PC-9 (cell line): ENCODE measurements at regions of chr9 and their contacts with region 1.

Region 1: DNA sequence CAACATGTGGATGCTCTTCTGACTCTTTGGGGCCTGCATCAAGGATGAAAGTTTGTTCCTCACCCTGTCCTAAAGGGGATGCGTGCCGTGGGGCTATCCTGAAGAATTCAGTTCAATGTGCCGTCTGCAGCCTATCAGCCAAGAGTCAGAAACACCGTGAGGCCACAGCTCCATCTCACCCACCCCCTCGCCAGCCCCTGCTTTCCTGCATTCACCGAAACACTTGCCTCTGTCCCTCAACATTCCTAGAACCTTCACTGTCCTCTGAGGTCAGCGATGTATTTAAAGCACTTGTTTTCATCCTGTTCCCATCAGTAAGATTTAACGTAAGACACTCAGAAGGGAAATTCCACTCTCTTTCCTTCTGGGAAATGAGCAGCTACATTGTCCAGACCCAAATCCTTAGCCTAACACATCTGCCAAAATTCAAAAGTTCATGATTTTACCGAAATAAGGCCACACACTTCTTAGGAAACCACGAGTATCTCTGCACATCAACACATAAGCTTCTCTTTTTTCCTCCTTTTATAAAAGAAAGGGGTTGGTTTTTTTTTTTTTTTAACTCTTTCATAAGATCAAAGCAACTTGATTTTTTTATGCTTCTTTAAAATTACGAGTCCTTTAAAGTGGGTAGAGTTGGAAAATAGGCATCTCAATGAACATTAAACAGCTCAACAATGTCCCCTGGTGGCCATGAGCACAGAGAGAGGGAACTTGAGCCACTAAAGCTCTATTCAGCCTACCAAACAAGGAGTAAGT is 100.7 kb downstream of the SUSD1 start:
- DNase-seq: peak; percentile 62 to 78
- H3K4me3 ChIP-seq: no peak overlapping the region
- H3K27ac ChIP-seq: peak overlapping the region; percentile 50
- H3K4me1 ChIP-seq: peaks cover 23% of the 10 kb centered on the region
- H3K27me3 ChIP-seq: no peaks in the 10 kb centered on the region
- CTCF ChIP-seq: peak; percentile 94

Region 2: GRCh38 chr9:111661150-111661801 is 413.2 kb before region 1 on chr9 and contains the start of gene GNG10:
- CTCF ChIA-PET with region 1: no interaction called
- POLR2A ChIA-PET with region 1: interaction called, 4 read pairs
- intact Hi-C with region 1: loop called (anchors 5 kb)
- DNase-seq: peak in 1 of 2 experiments; percentile 69
- H3K4me3 ChIP-seq: peak within 1 kb of the TSS; percentile 73
- H3K27ac ChIP-seq: peak within 1 kb of the TSS; percentile 48
- H3K4me1 ChIP-seq: peaks cover 16% of the 10 kb centered on the region
- H3K27me3 ChIP-seq: no peaks in the 10 kb centered on the region
- CTCF ChIP-seq: no peak
- total RNA-seq, gene GNG10: 70.8 and 76.9 TPM in 2 replicates

Region 3: DNA sequence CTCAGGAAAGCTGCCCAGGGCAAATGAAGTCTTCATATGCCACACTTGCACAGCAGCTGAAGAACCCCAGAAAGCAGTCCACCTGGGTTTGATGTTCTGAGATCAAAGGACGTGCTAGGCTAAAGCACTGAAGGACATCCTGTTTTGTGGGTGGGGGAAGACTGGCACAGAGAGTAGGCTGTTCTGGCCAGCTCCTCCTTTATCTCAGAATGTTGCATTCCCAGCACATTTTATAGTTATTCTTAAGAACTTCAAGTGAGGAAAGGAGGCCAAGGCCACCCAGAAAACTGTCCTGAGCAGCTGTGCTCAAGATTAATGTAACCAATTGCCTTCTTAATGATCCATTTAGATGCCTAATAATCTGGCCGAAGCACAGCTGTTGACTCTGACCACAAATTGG is 290.6 kb before region 1 on chr9:
- CTCF ChIA-PET with region 1: no interaction called
- POLR2A ChIA-PET with region 1: interaction called, 10 read pairs
- intact Hi-C with region 1: no loop called
- DNase-seq: no peak
- H3K4me3 ChIP-seq: no peak overlapping the region
- H3K27ac ChIP-seq: no peak overlapping the region
- H3K4me1 ChIP-seq: no peaks in the 10 kb centered on the region
- H3K27me3 ChIP-seq: no peaks in the 10 kb centered on the region
- CTCF ChIP-seq: no peak

Region 4: GRCh38 chr9:111904861-111905291 is 169.6 kb before region 1 on chr9:
- CTCF ChIA-PET with region 1: no interaction called
- POLR2A ChIA-PET with region 1: interaction called, 31 read pairs
- intact Hi-C with region 1: no loop called
- DNase-seq: no peak
- H3K4me3 ChIP-seq: no peak overlapping the region
- H3K27ac ChIP-seq: no peak overlapping the region; the same call in 1 of the 2 replicates
- H3K4me1 ChIP-seq: peaks cover 59% of the 10 kb centered on the region
- H3K27me3 ChIP-seq: no peaks in the 10 kb centered on the region
- CTCF ChIP-seq: no peak

Region 5: DNA sequence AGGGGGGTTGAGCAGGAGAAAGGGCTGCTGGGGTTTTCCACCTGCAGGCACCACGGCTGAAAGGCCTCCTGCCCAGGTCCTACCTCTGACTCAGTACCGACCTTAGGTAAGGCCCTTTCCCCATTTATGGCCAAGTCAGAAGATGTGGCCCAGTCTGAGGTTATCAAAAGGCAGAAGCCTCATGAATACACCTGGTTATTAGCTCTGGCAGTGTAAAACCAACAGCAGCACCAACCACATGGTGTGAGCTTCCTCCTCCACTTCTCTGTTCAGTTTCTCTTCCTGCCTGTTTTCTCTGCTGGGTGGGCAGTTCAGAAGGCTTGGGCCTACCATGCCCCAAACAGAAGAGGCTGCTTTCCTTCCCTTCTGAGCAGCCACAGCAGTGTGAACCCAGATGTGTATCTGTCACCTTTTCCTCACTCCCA is 90.9 kb before region 1 on chr9:
- CTCF ChIA-PET with region 1: no interaction called
- POLR2A ChIA-PET with region 1: no interaction called
- intact Hi-C with region 1: no loop called
- DNase-seq: no peak
- H3K4me3 ChIP-seq: no peak overlapping the region
- H3K27ac ChIP-seq: no peak overlapping the region
- H3K4me1 ChIP-seq: no peaks in the 10 kb centered on the region
- H3K27me3 ChIP-seq: no peaks in the 10 kb centered on the region
- CTCF ChIP-seq: no peak

Region 6: DNA sequence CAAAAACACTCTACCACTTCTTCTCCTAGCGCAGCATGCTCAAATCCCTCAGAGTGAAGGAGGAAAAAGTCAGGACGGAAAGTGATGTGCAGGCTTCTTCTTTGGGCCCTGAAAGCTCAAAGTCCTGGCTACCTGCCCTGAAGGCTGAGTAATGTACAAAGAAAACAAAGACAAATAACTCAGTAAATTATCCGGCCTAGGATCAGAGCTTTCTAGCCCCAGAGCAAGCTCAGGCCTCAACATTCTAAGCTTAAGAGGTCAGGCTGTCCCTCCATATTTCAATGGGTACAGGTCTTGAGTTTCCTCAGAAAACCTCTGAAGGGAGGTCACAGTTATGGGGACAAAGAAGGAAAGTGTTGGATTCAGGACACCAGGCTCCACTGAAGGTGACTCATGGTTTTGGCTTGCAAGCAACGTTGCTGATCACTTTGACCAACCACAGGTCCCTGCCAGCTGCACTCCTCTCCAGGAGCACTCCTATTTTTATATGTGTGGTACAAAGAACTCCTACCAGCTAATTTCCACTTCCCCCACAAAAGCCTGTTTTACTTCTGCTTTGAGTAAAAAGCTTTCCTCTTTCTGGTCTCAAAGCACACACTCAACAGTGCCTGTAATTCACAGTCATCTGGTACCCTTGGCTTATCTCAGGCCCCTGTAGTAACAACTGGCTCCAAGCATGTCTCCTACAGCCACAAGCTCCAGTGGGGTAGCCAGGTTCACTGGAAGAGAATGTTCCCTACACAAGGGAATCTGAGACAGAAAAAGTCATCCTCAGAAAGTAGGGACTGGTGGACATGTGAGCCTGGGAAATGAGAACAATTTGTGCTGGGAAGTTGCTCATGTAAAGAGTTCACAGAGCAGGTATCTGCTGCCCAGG is 62.2 kb before region 1 on chr9:
- CTCF ChIA-PET with region 1: interaction called, 5 read pairs
- POLR2A ChIA-PET with region 1: interaction called, 3 read pairs
- intact Hi-C with region 1: loop called (anchors 2 kb)
- DNase-seq: peak; percentile 83 to 91
- H3K4me3 ChIP-seq: peak overlapping the region; percentile 3; the same call in 1 of the 2 replicates
- H3K27ac ChIP-seq: peak overlapping the region; percentile 91
- H3K4me1 ChIP-seq: peaks cover 45% of the 10 kb centered on the region
- H3K27me3 ChIP-seq: no peaks in the 10 kb centered on the region
- CTCF ChIP-seq: no peak

Region 7: GRCh38 chr9:112180387-112180881 is 106.0 kb after region 1 on chr9:
- CTCF ChIA-PET with region 1: no interaction called
- POLR2A ChIA-PET with region 1: no interaction called
- intact Hi-C with region 1: no loop called
- DNase-seq: peak; percentile 32 to 85
- H3K4me3 ChIP-seq: no peak overlapping the region
- H3K27ac ChIP-seq: peak overlapping the region; percentile 55
- H3K4me1 ChIP-seq: peaks cover 35% of the 10 kb centered on the region
- H3K27me3 ChIP-seq: no peaks in the 10 kb centered on the region
- CTCF ChIP-seq: no peak

Region 8: DNA sequence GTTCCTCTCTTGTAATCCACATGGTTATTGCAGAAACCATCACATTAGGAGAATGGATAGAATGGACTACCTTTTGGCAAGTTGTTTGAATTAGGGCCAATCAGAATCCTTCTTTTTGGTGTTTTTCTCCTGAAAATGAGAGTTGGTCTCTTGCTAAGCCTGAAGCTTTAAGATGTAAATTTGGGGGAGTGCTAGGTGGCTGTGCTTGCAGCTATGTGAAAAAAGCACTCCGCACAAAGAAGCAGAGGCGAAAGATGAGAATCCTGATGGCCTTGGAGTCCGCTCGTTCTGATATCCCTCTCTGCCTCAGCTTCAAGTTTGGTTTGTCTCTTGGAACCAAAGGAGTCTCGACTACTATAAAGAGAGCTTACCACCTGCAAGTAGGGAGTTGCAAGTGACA is 579.9 kb after region 1 on chr9:
- CTCF ChIA-PET with region 1: no interaction called
- POLR2A ChIA-PET with region 1: interaction called, 10 read pairs
- intact Hi-C with region 1: no loop called
- DNase-seq: no peak
- H3K4me3 ChIP-seq: no peak overlapping the region
- H3K27ac ChIP-seq: no peak overlapping the region
- H3K4me1 ChIP-seq: no peaks in the 10 kb centered on the region
- H3K27me3 ChIP-seq: no peaks in the 10 kb centered on the region
- CTCF ChIP-seq: no peak